Motor neuron (in vitro differentiated cells): ENCODE measurements at regions of chr4 and their contacts with region 1.

Region 1: GRCh38 chr4:80566203-80566872 is 230.8 kb downstream of the CFAP299 start:
- ATAC-seq: peak in 1 of 8 experiments; percentile 19
- H3K4me3 ChIP-seq: no peak overlapping the region
- H3K27ac ChIP-seq: no peak overlapping the region
- H3K4me1 ChIP-seq: no peaks in the 10 kb centered on the region

Region 2: DNA sequence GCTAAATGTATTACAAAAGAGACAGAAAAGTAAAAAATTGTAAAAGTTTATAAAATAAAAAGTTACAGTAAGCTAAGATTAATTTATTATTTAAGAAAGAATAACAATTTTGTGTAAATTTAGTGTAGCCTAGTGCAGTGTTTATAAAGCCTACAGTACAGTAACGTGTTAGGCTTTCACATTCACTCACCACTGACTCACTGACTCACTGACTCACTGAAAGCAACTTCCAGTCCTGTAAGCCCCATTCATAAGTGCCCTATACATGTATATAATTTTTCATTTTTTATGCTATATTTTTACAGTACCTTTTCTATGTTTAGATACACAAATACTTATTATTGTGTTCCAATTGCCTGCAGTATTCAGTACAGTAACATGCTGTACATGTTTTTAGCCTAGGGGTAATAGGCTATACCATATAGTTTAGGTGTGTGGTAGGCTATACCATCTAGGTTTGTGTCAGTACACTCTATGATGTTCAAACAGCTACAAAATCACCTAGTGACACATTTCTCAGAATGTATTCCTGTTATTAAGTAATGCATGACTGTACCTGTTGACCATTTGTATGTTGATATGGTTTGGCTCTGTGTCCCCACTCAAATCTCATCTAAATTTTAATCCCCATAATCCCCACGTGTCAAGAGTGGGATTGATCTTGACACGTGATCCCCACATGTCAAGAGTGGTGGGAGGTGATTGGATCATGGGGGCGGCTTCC is 172.9 kb before region 1 on chr4:
- in situ Hi-C with region 1: loop called in 1 of 9 experiments (anchors 25 kb)
- ATAC-seq: peak in 3 of 8 experiments; percentile 21 to 61 (median 27)
- H3K4me3 ChIP-seq: no peak overlapping the region
- H3K27ac ChIP-seq: no peak overlapping the region
- H3K4me1 ChIP-seq: no peaks in the 10 kb centered on the region